ENCODE measurements at regions of chr10 and their contacts with region 1.

Region 1: DNA sequence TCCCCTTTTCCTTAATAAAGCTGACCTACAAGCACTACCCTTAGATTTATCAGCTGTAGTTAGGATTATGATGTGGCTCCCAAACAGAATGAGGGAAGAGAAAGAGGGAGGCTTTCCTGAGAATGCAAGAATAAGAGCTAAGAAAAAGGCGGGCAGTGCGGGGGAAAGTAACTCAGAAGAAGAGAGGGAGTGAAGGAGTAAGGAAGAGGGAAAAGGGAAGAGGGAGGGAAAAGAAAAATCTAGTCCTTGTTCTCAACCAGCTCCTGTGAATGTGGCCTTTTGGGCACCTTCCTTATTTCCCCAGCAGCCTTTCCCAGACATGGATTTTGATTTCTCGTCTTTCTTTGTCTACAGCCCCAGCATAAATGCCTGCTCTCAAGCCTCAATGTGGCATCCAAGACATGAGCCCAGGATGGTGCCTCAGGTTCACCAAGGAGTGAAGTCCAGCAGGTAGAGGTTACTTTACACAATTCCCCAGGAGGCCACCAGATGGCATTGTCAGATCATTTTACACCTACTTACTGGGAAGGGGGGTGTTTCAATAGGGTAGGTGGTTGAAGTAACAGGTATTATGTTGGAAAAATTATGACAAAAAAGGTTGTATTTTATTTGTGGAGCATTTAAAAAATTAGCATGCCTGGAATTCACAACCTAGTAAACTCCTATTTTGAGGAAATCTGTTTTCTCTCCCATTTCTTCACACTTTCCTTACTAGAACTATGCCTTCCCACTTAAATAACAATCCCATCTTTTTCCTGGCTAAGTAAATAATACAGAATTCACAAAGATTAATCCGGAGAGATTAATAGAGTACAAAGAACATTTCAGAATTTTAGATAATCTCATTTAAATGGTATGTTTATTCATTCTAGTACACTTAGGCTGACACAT is 106.5 kb downstream of the HTR7 start:
- DNase-seq: peak; percentile 54
- H3K4me3 ChIP-seq: no peak overlapping the region
- H3K27ac ChIP-seq: no peak overlapping the region
- H3K4me1 ChIP-seq: no peaks in the 10 kb centered on the region; a peak in 1 of 4 replicates
- H3K27me3 ChIP-seq: peaks cover 32% of the 10 kb centered on the region; the same call in 1 of the 2 replicates
- CTCF ChIP-seq: peak; percentile 86
- EP300 ChIP-seq: no peak
- RAD21 ChIP-seq: peak; percentile 81

Region 2: GRCh38 chr10:90723416-90724068 is 27.8 kb before region 1 on chr10:
- CTCF ChIA-PET with region 1: interaction called, 10 read pairs
- POLR2A ChIA-PET with region 1: no interaction called
- DNase-seq: no peak
- H3K4me3 ChIP-seq: no peak overlapping the region
- H3K27ac ChIP-seq: no peak overlapping the region
- H3K4me1 ChIP-seq: no peaks in the 10 kb centered on the region
- H3K27me3 ChIP-seq: no peaks in the 10 kb centered on the region; the same call in 1 of the 2 replicates
- CTCF ChIP-seq: no peak
- EP300 ChIP-seq: no peak
- RAD21 ChIP-seq: no peak

Region 3: DNA sequence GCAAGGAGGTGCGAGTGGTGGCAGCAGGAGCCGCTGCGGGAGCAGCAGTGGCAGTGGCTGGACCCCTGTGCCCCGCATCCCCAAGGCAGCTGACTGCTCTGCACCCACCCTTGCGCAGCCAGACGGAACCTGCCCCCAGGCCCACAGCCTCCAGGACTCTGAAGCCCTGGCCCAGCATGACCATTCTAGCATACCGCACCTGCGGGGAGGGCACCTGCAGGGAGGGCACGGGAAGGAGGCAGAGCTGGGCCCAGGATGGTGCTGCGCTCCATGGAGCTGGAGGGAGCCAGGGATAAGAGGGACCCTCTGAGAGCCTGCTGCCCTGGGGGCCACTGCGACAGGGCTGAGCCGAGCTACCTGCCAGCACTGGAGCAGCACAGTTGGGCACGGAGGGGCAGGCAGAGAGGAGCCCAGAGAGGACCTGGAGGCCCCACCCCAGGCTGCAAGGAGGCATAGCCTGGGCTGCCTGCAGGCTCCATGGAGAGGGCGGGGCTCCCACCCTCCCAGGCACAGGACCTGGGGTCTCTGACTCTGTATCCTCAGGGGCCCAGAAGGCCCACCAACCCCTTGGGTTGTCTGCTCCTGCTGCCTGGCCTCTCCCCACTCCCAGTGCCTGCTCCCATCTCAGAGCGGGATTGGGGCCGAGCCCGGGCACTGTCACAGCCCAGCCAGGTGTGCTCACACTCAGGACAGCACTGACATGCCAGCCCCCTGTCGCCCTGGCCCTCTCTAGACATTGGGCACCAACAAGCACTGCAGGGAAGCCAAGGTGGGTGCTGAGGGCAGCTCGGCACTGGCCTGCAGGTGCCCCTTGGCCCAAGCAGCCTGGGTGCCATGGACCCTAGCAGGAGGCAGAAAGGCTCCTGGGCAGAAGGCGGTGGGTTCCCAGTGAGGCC is 18.8 kb after region 1 on chr10:
- CTCF ChIA-PET with region 1: interaction called, 10 read pairs
- POLR2A ChIA-PET with region 1: no interaction called
- DNase-seq: no peak
- H3K4me3 ChIP-seq: no peak overlapping the region
- H3K27ac ChIP-seq: no peak overlapping the region
- H3K4me1 ChIP-seq: no peaks in the 10 kb centered on the region
- H3K27me3 ChIP-seq: no peaks in the 10 kb centered on the region
- CTCF ChIP-seq: no peak
- EP300 ChIP-seq: no peak
- RAD21 ChIP-seq: no peak

Region 4: GRCh38 chr10:90862908-90863514 is 111.7 kb after region 1 on chr10:
- CTCF ChIA-PET with region 1: interaction called, 22 read pairs
- POLR2A ChIA-PET with region 1: no interaction called
- DNase-seq: peak; percentile 43
- H3K4me3 ChIP-seq: no peak overlapping the region; a peak in 1 of 4 replicates
- H3K27ac ChIP-seq: no peak overlapping the region
- H3K4me1 ChIP-seq: peaks cover 0 to 8% of the 10 kb centered on the region in 2 experiments; a peak in 2 of 4 replicates
- H3K27me3 ChIP-seq: peaks cover 6% of the 10 kb centered on the region; the same call in 1 of the 2 replicates
- CTCF ChIP-seq: peak; percentile 97
- EP300 ChIP-seq: no peak
- RAD21 ChIP-seq: peak; percentile 78

Region 5: DNA sequence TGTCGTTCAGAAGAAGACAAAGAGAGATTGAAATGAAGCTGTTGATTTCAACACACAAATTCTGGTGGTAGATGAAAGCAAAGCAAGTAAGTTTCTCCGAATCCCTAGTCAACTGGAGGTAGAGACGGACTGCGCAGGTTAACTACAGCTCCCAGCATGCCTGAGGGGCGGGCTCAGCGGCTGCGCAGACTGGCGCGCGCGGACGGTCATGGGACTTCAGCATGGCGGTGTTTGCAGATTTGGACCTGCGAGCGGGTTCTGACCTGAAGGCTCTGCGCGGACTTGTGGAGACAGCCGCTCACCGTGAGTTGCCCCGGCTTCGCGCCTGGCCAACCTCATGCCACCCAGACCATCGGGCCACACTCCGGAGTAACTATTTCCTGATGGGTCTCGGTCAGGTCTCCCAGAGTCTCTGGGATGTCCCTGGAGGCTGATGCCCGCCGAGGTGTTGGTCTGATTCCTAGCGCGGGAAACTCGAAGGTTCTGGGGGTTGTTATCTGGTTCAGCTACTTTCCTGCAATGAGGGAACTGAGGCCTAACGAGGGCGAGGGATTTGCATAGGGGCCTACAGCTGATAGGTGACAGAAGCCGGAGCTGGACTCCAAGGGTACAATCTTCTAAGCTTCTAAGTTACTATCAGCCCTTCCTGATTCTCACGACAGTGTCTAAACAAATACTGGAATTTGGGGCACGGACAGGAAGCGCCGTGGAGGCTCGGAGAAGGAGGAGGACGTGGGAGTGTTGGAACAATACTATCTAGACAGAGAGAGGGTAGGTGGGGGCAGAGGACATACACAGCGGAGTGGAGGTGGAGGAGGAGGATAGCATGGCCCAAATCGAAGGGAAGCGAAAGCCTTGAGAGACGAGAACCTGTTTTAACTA is 120.7 kb after region 1 on chr10 and contains the start of gene RPP30:
- CTCF ChIA-PET with region 1: interaction called, 22 read pairs
- POLR2A ChIA-PET with region 1: no interaction called
- DNase-seq: peak; percentile 87
- H3K4me3 ChIP-seq: peak within 1 kb of the TSS; percentile 88 to 91
- H3K27ac ChIP-seq: peak within 1 kb of the TSS; percentile 25 to 60; a peak in 3 of 4 replicates
- H3K4me1 ChIP-seq: peaks cover 5 to 9% of the 10 kb centered on the region in 2 experiments; a peak in 3 of 4 replicates
- H3K27me3 ChIP-seq: no peaks in the 10 kb centered on the region
- CTCF ChIP-seq: no peak
- EP300 ChIP-seq: no peak
- RAD21 ChIP-seq: no peak
- polyA plus RNA-seq, gene RPP30: 16.7 and 18.6 TPM in 2 replicates

Measured in SK-N-SH (cell line).